ENCODE measurements at regions of chr1 and their contacts with region 1.

Region 1: DNA sequence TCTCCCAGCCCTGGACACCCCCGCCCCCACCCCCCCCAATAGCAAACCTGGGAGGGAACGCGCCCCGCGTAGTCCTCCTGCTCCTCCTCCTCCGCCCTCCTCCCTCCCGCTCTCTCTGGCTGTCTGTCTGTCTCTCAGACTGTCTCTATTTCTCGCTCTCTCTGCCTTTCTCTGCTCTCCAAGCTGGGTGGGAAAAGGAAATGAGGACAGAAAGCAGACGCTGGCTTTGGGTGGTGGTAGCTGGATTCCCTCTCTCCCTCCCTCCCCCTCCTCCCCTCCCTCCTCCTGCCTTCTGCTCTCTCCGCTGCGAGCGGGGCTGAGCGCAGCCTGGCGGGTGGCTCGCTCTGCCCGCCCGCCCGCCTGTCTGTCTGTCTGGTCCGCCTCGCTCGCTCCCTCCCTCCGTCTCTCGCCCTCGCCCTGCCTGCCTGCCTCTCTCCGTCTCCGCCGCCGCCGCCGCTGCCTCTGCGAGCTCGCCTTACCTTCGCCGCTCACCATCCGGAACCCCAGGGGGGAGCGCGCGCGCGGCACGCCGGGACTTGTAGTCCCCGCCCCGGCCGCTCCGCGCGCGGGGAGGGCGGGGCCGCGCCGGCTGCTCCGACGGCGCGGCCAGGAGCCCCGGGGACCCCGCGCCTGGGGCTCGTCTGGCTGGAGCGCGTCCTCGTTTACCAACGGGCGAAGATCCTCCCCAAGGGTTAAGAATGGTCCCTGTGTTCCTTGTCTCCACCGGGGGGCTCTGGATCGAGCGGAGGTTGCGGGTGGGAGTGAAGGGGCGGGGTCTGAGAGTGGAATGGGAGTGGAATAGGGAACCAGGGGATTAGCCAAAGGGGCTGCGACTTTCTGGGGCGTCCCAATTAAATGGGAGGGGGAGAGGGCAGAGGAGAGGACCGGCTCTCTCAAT is at the start of gene AHDC1:
- DNase-seq: peak; percentile 96
- ATAC-seq: peak; percentile 11
- H3K4me3 Mint-ChIP-seq: peak within 1 kb of the TSS; percentile 92
- H3K27ac Mint-ChIP-seq: peak within 1 kb of the TSS; percentile 88
- H3K4me1 Mint-ChIP-seq: peaks cover 61% of the 10 kb centered on the region
- H3K27me3 Mint-ChIP-seq: no peaks in the 10 kb centered on the region; the same call in 1 of the 2 replicates
- CTCF ChIP-seq: no peak
- total RNA-seq, gene AHDC1: 31.6 to 49.0 TPM (median 32.6 TPM) in 3 replicates

Region 2: GRCh38 chr1:27237112-27237511 is 366.8 kb before region 1 on chr1:
- CTCF ChIA-PET with region 1: no interaction called
- POLR2A ChIA-PET with region 1: no interaction called
- DNase-seq: no peak
- ATAC-seq: no peak
- H3K4me3 Mint-ChIP-seq: no peak overlapping the region
- H3K27ac Mint-ChIP-seq: no peak overlapping the region
- H3K4me1 Mint-ChIP-seq: peaks cover 11% of the 10 kb centered on the region
- H3K27me3 Mint-ChIP-seq: peaks cover 12% of the 10 kb centered on the region
- CTCF ChIP-seq: no peak

Region 3: DNA sequence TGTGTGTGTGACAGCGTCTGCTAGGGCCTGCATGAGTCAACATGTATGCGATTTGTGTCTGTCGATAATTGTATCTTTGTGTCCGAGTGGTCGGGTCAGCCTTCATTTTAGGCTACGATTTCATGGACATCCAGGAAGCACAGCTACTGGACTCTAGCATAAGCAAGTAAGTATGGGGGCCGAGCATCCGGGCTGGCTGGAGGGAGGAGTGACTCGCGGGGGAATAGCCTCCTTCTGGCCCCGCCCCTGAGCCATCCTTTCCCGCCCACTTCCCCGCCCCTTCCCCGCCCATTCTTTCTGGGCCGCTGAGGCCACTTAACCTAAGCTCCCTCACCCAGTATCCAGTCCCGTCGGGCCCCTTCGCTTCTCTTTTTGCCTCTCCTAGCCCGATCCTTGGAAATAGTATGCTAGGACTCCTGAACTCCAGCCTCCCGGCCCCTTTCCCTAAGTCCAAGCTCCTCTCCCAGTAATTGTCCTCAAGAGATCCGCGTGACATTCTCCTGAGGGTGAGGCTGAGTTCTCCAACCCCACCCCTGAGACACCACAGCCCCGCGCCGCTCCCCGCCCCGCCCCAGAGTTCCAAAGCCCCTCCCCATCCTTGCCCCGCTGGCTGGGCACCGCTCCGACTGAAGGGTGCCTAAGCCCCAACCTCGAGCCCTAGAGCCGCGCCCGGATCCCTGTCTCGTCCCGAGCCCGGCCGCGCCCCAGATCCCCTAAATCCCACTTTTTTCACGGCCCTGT is 238.4 kb before region 1 on chr1:
- CTCF ChIA-PET with region 1: interaction called, 13 read pairs
- POLR2A ChIA-PET with region 1: interaction called, 3 read pairs
- DNase-seq: peak; percentile 86
- ATAC-seq: peak; percentile 53
- H3K4me3 Mint-ChIP-seq: peak overlapping the region; percentile 84
- H3K27ac Mint-ChIP-seq: peak overlapping the region; percentile 97
- H3K4me1 Mint-ChIP-seq: peaks cover 25% of the 10 kb centered on the region
- H3K27me3 Mint-ChIP-seq: peaks cover 33% of the 10 kb centered on the region
- CTCF ChIP-seq: no peak

Region 4: DNA sequence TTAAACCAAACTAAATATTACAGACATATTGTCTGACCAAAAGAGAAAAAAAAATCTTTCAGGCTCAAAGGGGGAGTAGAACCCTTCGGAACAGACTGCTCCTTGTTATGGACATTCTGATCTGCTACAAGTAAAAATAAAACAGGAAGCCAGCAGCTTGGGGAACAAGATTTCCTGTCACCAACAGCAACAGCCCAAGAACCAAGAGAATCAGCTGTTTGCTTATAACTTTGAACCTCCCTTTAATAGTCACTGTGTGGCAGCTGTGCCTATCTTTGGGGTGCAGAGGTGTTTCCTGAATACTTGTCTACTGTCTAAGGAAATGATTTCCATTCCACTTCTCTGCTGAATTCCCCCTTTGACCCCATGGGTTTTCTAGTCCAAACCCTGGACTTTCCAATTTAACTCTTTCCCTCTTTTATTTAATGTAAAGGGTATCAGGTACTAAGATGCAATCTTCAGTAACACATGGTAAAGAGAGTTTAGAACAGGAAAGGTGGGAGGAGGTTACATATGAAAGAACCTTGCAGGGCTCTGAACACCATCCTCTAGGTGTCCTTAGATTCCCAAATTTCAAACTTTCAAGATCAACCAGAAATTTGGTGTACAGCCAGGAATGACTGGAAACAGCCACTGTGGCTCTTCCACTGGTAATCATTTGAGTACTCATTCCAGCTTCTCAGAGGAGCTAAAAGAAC is 172.9 kb before region 1 on chr1:
- CTCF ChIA-PET with region 1: interaction called, 14 read pairs
- POLR2A ChIA-PET with region 1: no interaction called
- DNase-seq: no peak
- ATAC-seq: no peak
- H3K4me3 Mint-ChIP-seq: no peak overlapping the region
- H3K27ac Mint-ChIP-seq: peak overlapping the region; percentile 91
- H3K4me1 Mint-ChIP-seq: peaks cover 75% of the 10 kb centered on the region
- H3K27me3 Mint-ChIP-seq: no peaks in the 10 kb centered on the region
- CTCF ChIP-seq: no peak

Region 5: GRCh38 chr1:27568300-27569087 is 35.4 kb before region 1 on chr1:
- CTCF ChIA-PET with region 1: interaction called, 366 read pairs
- POLR2A ChIA-PET with region 1: interaction called, 33 read pairs
- DNase-seq: peak; percentile 93
- ATAC-seq: peak; percentile 59
- H3K4me3 Mint-ChIP-seq: peak overlapping the region; percentile 58
- H3K27ac Mint-ChIP-seq: peak overlapping the region; percentile 39; the same call in 1 of the 2 replicates
- H3K4me1 Mint-ChIP-seq: peaks cover 88% of the 10 kb centered on the region
- H3K27me3 Mint-ChIP-seq: no peaks in the 10 kb centered on the region
- CTCF ChIP-seq: peak; percentile 70

Region 6: GRCh38 chr1:27616441-27616840 is 12.5 kb after region 1 on chr1:
- CTCF ChIA-PET with region 1: interaction called, 19 read pairs
- POLR2A ChIA-PET with region 1: interaction called, 3 read pairs
- DNase-seq: no peak
- ATAC-seq: peak; percentile 6; the same call in 1 of the 2 replicates
- H3K4me3 Mint-ChIP-seq: peak overlapping the region; percentile 48
- H3K27ac Mint-ChIP-seq: no peak overlapping the region
- H3K4me1 Mint-ChIP-seq: peaks cover 15% of the 10 kb centered on the region
- H3K27me3 Mint-ChIP-seq: peaks cover 15% of the 10 kb centered on the region
- CTCF ChIP-seq: no peak

Region 7: DNA sequence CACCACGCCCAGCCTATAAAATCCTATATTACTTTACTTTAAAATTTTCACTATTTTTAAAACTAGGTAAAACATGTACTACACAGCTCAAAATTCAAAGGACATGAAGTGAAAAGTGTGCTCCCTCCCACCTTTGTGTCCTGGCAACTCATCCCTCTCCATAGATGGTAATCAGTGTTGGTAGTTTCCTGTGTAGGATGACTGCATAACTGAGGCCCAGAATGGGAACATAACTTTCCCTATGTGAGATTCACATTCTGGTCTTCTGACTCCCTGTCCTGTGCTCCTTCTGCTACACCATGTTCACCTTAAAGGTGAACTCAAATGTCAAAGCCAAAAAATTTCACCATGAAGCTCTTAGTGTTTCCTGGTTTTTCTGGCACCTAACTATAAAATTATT is 395.1 kb after region 1 on chr1:
- CTCF ChIA-PET with region 1: no interaction called
- POLR2A ChIA-PET with region 1: no interaction called
- DNase-seq: no peak
- ATAC-seq: no peak
- H3K4me3 Mint-ChIP-seq: no peak overlapping the region
- H3K27ac Mint-ChIP-seq: no peak overlapping the region
- H3K4me1 Mint-ChIP-seq: no peaks in the 10 kb centered on the region
- H3K27me3 Mint-ChIP-seq: no peaks in the 10 kb centered on the region
- CTCF ChIP-seq: no peak